Heart right ventricle (tissue), 16 donors: ENCODE measurements at regions of chr3 and their contacts with region 1.

Region 1: DNA sequence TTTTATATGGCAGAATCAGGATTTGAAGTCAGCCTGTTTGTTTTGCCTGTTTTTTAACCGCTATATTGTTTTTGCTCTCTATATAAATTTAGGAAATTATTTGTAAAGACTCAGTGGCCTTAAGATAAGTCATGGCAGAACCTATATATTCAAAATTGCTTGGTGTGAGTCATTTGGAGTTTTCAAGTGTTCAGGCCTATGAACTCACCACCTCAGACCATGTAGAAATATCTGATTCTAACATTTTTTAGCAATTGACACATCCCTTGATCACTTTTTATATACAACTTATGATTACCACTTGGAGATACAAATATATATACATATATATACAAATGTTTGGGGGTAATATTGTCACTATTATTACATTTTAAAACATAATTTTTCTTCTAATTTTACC is 95.7 kb downstream of the VGLL3 start:
- DNase-seq: no peak
- ATAC-seq: no peak
- H3K4me3 ChIP-seq: no peak overlapping the region
- H3K27ac ChIP-seq: no peak overlapping the region
- H3K4me1 ChIP-seq: no peaks in the 10 kb centered on the region
- H3K27me3 ChIP-seq: no peaks in the 10 kb centered on the region
- CTCF ChIP-seq: no peak

Region 2: DNA sequence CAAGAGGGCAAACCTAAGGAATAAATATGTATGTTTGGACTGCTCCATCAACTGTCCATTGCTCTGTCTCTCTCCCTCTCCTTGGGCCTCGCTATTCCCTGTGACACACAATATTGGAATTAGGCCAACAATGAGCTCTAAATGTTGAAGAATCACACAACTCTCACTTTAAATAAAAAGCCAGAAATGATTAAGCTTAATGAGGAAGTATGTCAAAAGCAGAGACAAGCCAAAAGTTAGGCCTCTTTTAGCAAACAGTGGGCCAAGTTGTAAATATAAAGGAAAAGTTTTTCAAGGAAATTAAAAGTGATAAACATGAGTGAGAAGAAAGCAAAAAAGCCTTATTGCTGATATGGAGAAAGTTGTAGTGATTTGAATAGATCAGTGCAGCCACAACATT is 45.2 kb before region 1 on chr3:
- intact Hi-C with region 1: loop called in 1 of 10 experiments (anchors 2 kb)
- DNase-seq: no peak
- ATAC-seq: no peak
- H3K4me3 ChIP-seq: no peak overlapping the region
- H3K27ac ChIP-seq: no peak overlapping the region
- H3K4me1 ChIP-seq: no peaks in the 10 kb centered on the region
- H3K27me3 ChIP-seq: no peaks in the 10 kb centered on the region
- CTCF ChIP-seq: no peak

Region 3: GRCh38 chr3:87082796-87083440 is 187.7 kb after region 1 on chr3:
- intact Hi-C with region 1: no loop called
- DNase-seq: peak in 1 of 2 donors; percentile 23
- ATAC-seq: peak in 5 of 8 donors; percentile 33 to 79 (median 62)
- H3K4me3 ChIP-seq: no peak overlapping the region
- H3K27ac ChIP-seq: no peak overlapping the region
- H3K4me1 ChIP-seq: no peaks in the 10 kb centered on the region
- H3K27me3 ChIP-seq: no peaks in the 10 kb centered on the region
- CTCF ChIP-seq: peak in 7 of 9 donors; percentile 42 to 65 (median 56)